CD4-positive, alpha-beta memory T cell (primary cell): ENCODE measurements at regions of chr5 and their contacts with region 1.

Region 1: GRCh38 chr5:107545486-107545885 is 125.3 kb downstream of the EFNA5 start:
- DNase-seq: no peak
- H3K4me3 ChIP-seq: no peak overlapping the region
- H3K4me3 Mint-ChIP-seq: no peak overlapping the region
- H3K27ac ChIP-seq: no peak overlapping the region
- H3K27ac Mint-ChIP-seq: no peak overlapping the region
- H3K4me1 ChIP-seq: no peaks in the 10 kb centered on the region
- H3K4me1 Mint-ChIP-seq: no peaks in the 10 kb centered on the region
- H3K27me3 ChIP-seq: no peaks in the 10 kb centered on the region
- H3K27me3 Mint-ChIP-seq: no peaks in the 10 kb centered on the region

Region 2: GRCh38 chr5:107571621-107572536 is 26.4 kb after region 1 on chr5:
- CTCF ChIA-PET with region 1: interaction called, 12 read pairs
- POLR2A ChIA-PET with region 1: no interaction called
- intact Hi-C with region 1: no loop called
- DNase-seq: peak; percentile 73 to 79 (median 75)
- H3K4me3 ChIP-seq: peak overlapping the region; percentile 41 to 82
- H3K4me3 Mint-ChIP-seq: peak overlapping the region; percentile 81 to 93 (median 84)
- H3K27ac ChIP-seq: no peak overlapping the region
- H3K27ac Mint-ChIP-seq: peak overlapping the region in 4 of 7 donors; percentile 21 to 88 (median 56)
- H3K4me1 ChIP-seq: peaks cover 10% of the 10 kb centered on the region
- H3K4me1 Mint-ChIP-seq: peaks cover 9 to 22% (median 16%) of the 10 kb centered on the region in 4 donors
- H3K27me3 ChIP-seq: no peaks in the 10 kb centered on the region
- H3K27me3 Mint-ChIP-seq: peaks cover 9 to 13% of the 10 kb centered on the region in 2 donors